ENCODE measurements at regions of chr11 and their contacts with region 1.

Region 1: GRCh38 chr11:86021377-86021776 is 47.5 kb downstream of the PICALM start:
- DNase-seq: no peak
- ATAC-seq: no peak
- H3K4me3 ChIP-seq: no peak overlapping the region
- H3K27ac ChIP-seq: no peak overlapping the region
- H3K4me1 ChIP-seq: no peaks in the 10 kb centered on the region
- H3K27me3 ChIP-seq: no peaks in the 10 kb centered on the region
- CTCF ChIP-seq: no peak
- POLR2A ChIP-seq: no peak
- RAD21 ChIP-seq: no peak

Region 2: DNA sequence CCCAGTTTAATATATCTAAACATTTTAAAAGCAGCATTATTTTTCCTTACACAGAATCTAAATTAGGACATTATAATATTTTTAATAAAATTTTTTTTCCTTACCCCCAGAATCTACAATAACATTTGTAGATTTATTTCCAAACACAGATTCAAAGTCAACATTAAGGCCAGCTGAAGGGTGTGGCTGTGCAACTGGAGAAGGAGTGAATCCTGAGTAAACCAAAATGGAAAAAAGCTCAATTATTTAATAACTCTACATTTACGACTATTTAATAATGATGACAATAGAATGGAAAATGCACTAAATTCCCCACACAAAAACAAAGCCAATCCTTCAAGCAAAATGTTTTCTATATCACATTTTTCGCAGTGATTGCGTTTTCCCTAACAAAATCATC is 37.6 kb before region 1 on chr11:
- CTCF ChIA-PET with region 1: interaction called, 8 read pairs
- POLR2A ChIA-PET with region 1: no interaction called
- dilution Hi-C with region 1: no loop called
- in situ Hi-C with region 1: no loop called
- intact Hi-C with region 1: loop called (anchors 5 kb)
- DNase-seq: no peak
- ATAC-seq: no peak
- H3K4me3 ChIP-seq: no peak overlapping the region
- H3K27ac ChIP-seq: no peak overlapping the region
- H3K4me1 ChIP-seq: no peaks in the 10 kb centered on the region; the same call in 1 of the 2 replicates
- H3K27me3 ChIP-seq: no peaks in the 10 kb centered on the region
- CTCF ChIP-seq: no peak
- POLR2A ChIP-seq: no peak
- RAD21 ChIP-seq: no peak